HEK293 (cell line): ENCODE measurements at regions of chr1 and their contacts with region 1.

Region 1: DNA sequence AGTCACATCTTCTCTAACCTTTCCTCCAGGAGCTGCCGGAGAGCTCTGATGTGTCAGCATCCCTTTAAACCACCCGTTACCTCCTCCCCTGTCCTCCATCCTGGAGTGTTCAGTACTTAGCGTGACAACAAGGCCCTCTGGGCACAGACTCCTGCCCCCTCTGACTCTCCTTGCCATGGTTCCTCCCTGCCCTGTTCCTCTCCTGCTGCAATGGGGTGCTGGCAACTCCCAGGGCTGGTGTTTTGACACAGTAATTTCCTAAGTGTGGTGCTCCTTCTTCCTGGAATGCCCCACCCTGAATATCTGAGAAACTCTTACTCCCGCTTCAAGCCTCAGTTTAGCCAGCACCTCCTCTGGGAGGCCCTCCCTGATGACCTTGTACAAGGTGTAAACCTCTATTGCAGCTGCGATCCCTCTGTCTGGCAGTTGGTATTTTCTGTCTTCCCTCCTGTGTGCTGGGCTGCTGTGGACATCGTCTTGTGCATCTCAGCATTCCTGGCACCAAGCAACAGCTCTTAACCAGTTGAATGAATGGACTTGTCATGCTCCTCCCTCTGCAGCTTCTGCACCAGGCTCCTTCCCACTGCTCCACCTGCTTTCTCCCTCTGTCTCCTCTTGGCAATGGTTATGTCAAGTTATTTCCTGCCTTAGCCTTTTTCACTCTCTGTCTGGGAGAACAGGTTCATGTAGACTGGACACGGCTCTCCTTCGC is 48.2 kb upstream of the ETV3 start:
- H3K4me3 ChIP-seq: no peak overlapping the region
- H3K27ac ChIP-seq: no peak overlapping the region
- H3K4me1 ChIP-seq: no peaks in the 10 kb centered on the region
- CTCF ChIP-seq: no peak

Region 2: GRCh38 chr1:157136133-157136532 is 50.3 kb before region 1 on chr1:
- CTCF ChIA-PET with region 1: no interaction called
- POLR2A ChIA-PET with region 1: no interaction called
- H3K4me3 ChIP-seq: no peak overlapping the region
- H3K27ac ChIP-seq: no peak overlapping the region
- H3K4me1 ChIP-seq: peaks cover 6% of the 10 kb centered on the region
- CTCF ChIP-seq: no peak

Region 3: GRCh38 chr1:157198619-157199420 is 12.4 kb after region 1 on chr1:
- CTCF ChIA-PET with region 1: interaction called, 26 read pairs
- POLR2A ChIA-PET with region 1: no interaction called
- H3K4me3 ChIP-seq: no peak overlapping the region
- H3K27ac ChIP-seq: no peak overlapping the region
- H3K4me1 ChIP-seq: no peaks in the 10 kb centered on the region
- CTCF ChIP-seq: no peak